ENCODE measurements at regions of chr6 and their contacts with region 1.

Region 1: GRCh38 chr6:43096451-43097097 is 20.5 kb downstream of the PTK7 start:
- DNase-seq: peak; percentile 95
- H3K4me3 ChIP-seq: peak overlapping the region; percentile 21 to 54 (median 23)
- H3K27ac ChIP-seq: peak overlapping the region; percentile 81
- H3K4me1 ChIP-seq: peaks cover 53% of the 10 kb centered on the region
- H3K27me3 ChIP-seq: no peaks in the 10 kb centered on the region
- CTCF ChIP-seq: no peak

Region 2: GRCh38 chr6:43009124-43009523 is 87.5 kb before region 1 on chr6:
- CTCF ChIA-PET with region 1: no interaction called
- dilution Hi-C with region 1: no loop called
- in situ Hi-C with region 1: no loop called
- intact Hi-C with region 1: no loop called
- DNase-seq: no peak
- H3K4me3 ChIP-seq: no peak overlapping the region
- H3K27ac ChIP-seq: no peak overlapping the region
- H3K4me1 ChIP-seq: peaks cover 18% of the 10 kb centered on the region
- H3K27me3 ChIP-seq: no peaks in the 10 kb centered on the region
- CTCF ChIP-seq: peak; percentile 41 to 48

Region 3: GRCh38 chr6:43021270-43022047 is 75.1 kb before region 1 on chr6 and contains the start of gene RRP36:
- CTCF ChIA-PET with region 1: no interaction called
- dilution Hi-C with region 1: loop called (anchors 5 kb)
- in situ Hi-C with region 1: no loop called
- intact Hi-C with region 1: no loop called
- DNase-seq: peak; percentile 63
- H3K4me3 ChIP-seq: peak within 1 kb of the TSS; percentile 89 to 97 (median 90)
- H3K27ac ChIP-seq: peak within 1 kb of the TSS; percentile 52
- H3K4me1 ChIP-seq: peaks cover 7% of the 10 kb centered on the region
- H3K27me3 ChIP-seq: no peaks in the 10 kb centered on the region
- CTCF ChIP-seq: no peak
- total RNA-seq, gene RRP36: 61.0 to 85.0 TPM

Region 4: GRCh38 chr6:43059168-43060033 is 37.2 kb before region 1 on chr6 and contains the starts of genes KLC4 and MRPL2:
- CTCF ChIA-PET with region 1: no interaction called
- dilution Hi-C with region 1: no loop called
- in situ Hi-C with region 1: no loop called
- intact Hi-C with region 1: no loop called
- DNase-seq: peak; percentile 98
- H3K4me3 ChIP-seq: peak within 1 kb of the TSS; percentile 86 to 95 (median 89)
- H3K27ac ChIP-seq: peak within 1 kb of the TSS; percentile 80
- H3K4me1 ChIP-seq: peaks cover 21% of the 10 kb centered on the region
- H3K27me3 ChIP-seq: no peaks in the 10 kb centered on the region
- CTCF ChIP-seq: no peak
- total RNA-seq, gene KLC4: 17.5 to 20.2 TPM
- total RNA-seq, gene MRPL2: 13.3 to 75.2 TPM

Region 5: GRCh38 chr6:43075670-43076463 is 20.7 kb before region 1 on chr6 and contains the start of gene PTK7:
- CTCF ChIA-PET with region 1: no interaction called
- dilution Hi-C with region 1: no loop called
- in situ Hi-C with region 1: no loop called
- intact Hi-C with region 1: loop called (anchors 2 kb)
- DNase-seq: peak; percentile 47
- H3K4me3 ChIP-seq: peak within 1 kb of the TSS; percentile 92 to 94 (median 94)
- H3K27ac ChIP-seq: peak within 1 kb of the TSS; percentile 75
- H3K4me1 ChIP-seq: peaks cover 17% of the 10 kb centered on the region
- H3K27me3 ChIP-seq: no peaks in the 10 kb centered on the region
- CTCF ChIP-seq: no peak
- total RNA-seq, gene PTK7: 141 to 277 TPM

Region 6: GRCh38 chr6:43120944-43121913 is 24.7 kb after region 1 on chr6:
- CTCF ChIA-PET with region 1: no interaction called
- dilution Hi-C with region 1: no loop called
- in situ Hi-C with region 1: no loop called
- intact Hi-C with region 1: loop called (anchors 2 kb)
- DNase-seq: peak; percentile 93
- H3K4me3 ChIP-seq: no peak overlapping the region
- H3K27ac ChIP-seq: peak overlapping the region; percentile 95
- H3K4me1 ChIP-seq: peaks cover 56% of the 10 kb centered on the region
- H3K27me3 ChIP-seq: no peaks in the 10 kb centered on the region
- CTCF ChIP-seq: peak in 1 of 2 donors; percentile 16

Region 7: DNA sequence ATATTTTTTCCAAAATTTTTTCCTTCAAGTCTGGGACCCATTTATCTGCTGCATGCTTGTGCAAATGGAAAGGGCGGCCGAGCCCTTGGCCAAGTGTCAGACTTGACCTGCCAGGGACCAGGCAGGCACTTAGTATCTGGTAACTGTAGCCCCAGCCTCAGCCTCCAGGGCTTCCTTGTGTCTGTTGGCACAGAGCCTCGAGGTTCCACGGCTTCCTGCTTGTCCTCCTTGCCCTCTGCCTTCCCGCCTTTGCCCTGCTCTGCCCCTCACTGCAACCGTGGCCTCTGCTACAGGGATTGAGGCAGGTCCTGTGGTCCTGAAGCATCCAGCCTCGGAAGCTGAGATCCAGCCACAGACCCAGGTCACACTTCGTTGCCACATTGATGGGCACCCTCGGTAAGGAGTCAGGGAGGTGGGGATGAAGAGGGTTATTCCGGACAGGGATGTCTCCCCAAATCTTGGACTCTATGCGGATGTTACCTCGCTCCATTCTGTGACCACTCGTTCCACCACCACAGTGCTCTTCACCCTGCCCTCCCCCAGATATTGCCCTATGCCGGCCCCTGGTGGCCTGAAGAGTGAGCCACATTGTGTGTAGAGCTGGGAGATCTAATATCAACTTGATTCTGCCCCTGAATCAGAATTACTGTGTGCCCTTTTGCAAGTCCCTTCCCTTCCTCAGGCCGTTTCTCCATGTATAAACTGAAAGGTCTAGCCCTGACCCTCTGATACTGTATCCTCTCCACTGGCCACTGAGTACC is 33.0 kb after region 1 on chr6:
- CTCF ChIA-PET with region 1: interaction called, 3 read pairs
- dilution Hi-C with region 1: no loop called
- in situ Hi-C with region 1: no loop called
- intact Hi-C with region 1: loop called (anchors 1 kb)
- DNase-seq: peak; percentile 46
- H3K4me3 ChIP-seq: no peak overlapping the region
- H3K27ac ChIP-seq: no peak overlapping the region
- H3K4me1 ChIP-seq: peaks cover 30% of the 10 kb centered on the region
- H3K27me3 ChIP-seq: no peaks in the 10 kb centered on the region
- CTCF ChIP-seq: peak; percentile 49 to 78

Measured in mammary epithelial cell (primary cell).